ENCODE measurements at regions of chr2 and their contacts with region 1.

Region 1: DNA sequence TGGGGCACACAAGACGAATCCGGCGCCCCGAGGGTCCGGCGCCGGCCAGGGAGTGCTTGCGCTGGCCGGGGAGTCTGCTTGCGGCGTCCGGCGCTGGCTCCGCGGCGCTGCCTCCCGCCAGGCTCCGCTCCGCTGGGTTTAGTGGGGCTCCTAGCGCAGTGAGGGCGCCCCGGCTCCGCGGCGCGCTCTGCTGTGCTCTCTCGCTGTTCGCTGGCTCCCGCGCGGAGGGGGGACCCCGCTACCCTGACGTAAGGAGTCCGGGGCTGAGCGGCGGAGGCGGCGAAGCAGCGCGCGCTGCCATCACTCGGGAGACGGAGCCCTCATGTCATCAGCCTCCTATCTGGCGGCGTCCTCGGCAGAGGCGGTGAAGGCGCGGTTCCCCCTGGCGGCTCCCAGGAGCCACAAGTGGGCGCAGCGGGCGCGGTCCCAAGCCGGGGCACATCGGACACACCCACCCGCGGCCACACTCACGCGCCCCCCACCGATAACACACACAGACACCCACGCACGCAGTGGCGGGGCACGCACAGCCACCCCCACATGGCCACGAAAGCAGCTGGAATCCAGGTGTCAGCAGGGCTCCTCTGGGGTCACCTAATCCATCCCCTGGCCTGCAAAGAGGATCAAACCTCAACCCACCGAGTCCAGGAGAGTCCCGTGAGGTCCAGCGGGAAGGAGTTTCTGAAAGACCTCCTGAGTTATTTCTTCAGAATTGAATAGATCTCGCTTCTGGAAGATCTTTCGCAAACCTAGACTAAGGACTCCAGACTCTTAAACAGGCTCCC is at the start of gene C1QL2:
- DNase-seq: no peak
- H3K4me3 ChIP-seq: no peak within 1 kb of the TSS
- H3K27me3 ChIP-seq: peaks cover 37% of the 10 kb centered on the region
- CTCF ChIP-seq: no peak
- polyA plus RNA-seq, gene C1QL2: not detected in 2 replicates

Region 2: GRCh38 chr2:118847497-118848172 is 311.1 kb before region 1 on chr2 and contains the start of gene EN1:
- CTCF ChIA-PET with region 1: no interaction called
- POLR2A ChIA-PET with region 1: no interaction called
- DNase-seq: no peak
- H3K4me3 ChIP-seq: no peak within 1 kb of the TSS; the same call in 1 of the 2 replicates
- H3K27me3 ChIP-seq: peaks cover 74% of the 10 kb centered on the region
- CTCF ChIP-seq: no peak
- polyA plus RNA-seq, gene EN1: not detected in 2 replicates

Region 3: DNA sequence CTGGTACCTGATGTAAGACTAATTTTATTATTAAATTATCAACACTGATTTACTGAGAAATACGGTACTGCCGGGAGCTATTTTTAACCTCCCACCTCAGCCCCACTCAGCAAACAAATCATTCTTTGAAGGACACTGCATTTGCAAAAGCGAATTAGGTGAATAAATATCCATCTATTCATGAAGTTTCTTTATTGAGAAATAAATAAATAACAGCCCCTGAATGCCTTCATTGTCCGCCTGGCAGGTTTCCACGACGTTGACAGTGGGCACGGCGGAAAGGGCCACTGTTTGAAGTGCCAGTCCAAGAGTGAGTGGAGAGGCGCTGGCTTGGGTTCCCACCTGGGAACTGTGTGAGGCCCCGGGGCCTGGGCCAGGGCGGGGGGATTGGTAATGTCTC is 15.9 kb before region 1 on chr2:
- CTCF ChIA-PET with region 1: no interaction called
- POLR2A ChIA-PET with region 1: no interaction called
- DNase-seq: no peak
- H3K4me3 ChIP-seq: no peak overlapping the region
- H3K27me3 ChIP-seq: 0 out of 2 replicates have a peak, but pooled peaks cover 1% of the 10 kb centered on the region
- CTCF ChIP-seq: no peak

Region 4: DNA sequence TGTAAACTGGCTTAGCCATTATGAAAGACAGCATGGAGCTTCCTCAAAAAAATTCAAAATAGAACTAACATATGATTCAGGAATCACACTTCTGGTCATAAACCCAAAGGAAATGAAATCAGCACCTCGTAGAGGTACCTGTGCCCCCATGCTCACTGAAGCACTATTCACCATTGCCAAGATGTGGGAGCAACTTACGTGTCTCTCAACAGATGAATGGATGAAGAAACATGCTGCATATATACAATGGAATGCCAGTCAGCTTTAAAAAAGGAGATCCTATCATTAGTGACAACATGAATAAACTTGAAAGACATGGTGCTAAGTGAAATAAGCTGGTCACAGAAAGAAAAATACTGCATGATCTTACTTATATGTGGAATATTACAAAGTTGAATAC is 357.4 kb after region 1 on chr2:
- CTCF ChIA-PET with region 1: no interaction called
- POLR2A ChIA-PET with region 1: interaction called, 15 read pairs
- DNase-seq: no peak
- H3K4me3 ChIP-seq: no peak overlapping the region
- H3K27me3 ChIP-seq: no peaks in the 10 kb centered on the region
- CTCF ChIP-seq: no peak

Region 5: GRCh38 chr2:119678998-119679710 is 520.4 kb after region 1 on chr2 and contains the start of gene TMEM177:
- CTCF ChIA-PET with region 1: no interaction called
- POLR2A ChIA-PET with region 1: no interaction called
- DNase-seq: no peak
- H3K4me3 ChIP-seq: peak within 1 kb of the TSS; percentile 77
- H3K27me3 ChIP-seq: peaks cover 4% of the 10 kb centered on the region; the same call in 1 of the 2 replicates
- CTCF ChIP-seq: no peak
- polyA plus RNA-seq, gene TMEM177: 6.2 and 8.3 TPM in 2 replicates

Measured in BJ (cell line).